Upper lobe of right lung (tissue), 1 donor: ENCODE measurements at regions of chr16 and their contacts with region 1.

Region 1: GRCh38 chr16:77971306-77972271 is 50.8 kb upstream of the CLEC3A start:
- DNase-seq: peak; percentile 89
- ATAC-seq: peak; percentile 97
- H3K4me3 ChIP-seq: no peak overlapping the region
- H3K27ac ChIP-seq: no peak overlapping the region
- H3K4me1 ChIP-seq: no peaks in the 10 kb centered on the region
- H3K27me3 ChIP-seq: peaks cover 14% of the 10 kb centered on the region
- CTCF ChIP-seq: peak; percentile 74

Region 2: GRCh38 chr16:77359065-77359502 is 612.5 kb before region 1 on chr16:
- intact Hi-C with region 1: no loop called
- DNase-seq: no peak
- ATAC-seq: peak; percentile 80
- H3K4me3 ChIP-seq: no peak overlapping the region
- H3K27ac ChIP-seq: no peak overlapping the region
- H3K4me1 ChIP-seq: no peaks in the 10 kb centered on the region
- H3K27me3 ChIP-seq: no peaks in the 10 kb centered on the region
- CTCF ChIP-seq: no peak

Region 3: GRCh38 chr16:77675464-77676324 is 295.9 kb before region 1 on chr16:
- intact Hi-C with region 1: loop called (anchors 2 kb)
- DNase-seq: no peak
- ATAC-seq: peak; percentile 96
- H3K4me3 ChIP-seq: no peak overlapping the region
- H3K27ac ChIP-seq: no peak overlapping the region
- H3K4me1 ChIP-seq: peaks cover 3% of the 10 kb centered on the region
- H3K27me3 ChIP-seq: no peaks in the 10 kb centered on the region
- CTCF ChIP-seq: peak; percentile 89